ENCODE measurements at regions of chr18 and their contacts with region 1.

Region 1: DNA sequence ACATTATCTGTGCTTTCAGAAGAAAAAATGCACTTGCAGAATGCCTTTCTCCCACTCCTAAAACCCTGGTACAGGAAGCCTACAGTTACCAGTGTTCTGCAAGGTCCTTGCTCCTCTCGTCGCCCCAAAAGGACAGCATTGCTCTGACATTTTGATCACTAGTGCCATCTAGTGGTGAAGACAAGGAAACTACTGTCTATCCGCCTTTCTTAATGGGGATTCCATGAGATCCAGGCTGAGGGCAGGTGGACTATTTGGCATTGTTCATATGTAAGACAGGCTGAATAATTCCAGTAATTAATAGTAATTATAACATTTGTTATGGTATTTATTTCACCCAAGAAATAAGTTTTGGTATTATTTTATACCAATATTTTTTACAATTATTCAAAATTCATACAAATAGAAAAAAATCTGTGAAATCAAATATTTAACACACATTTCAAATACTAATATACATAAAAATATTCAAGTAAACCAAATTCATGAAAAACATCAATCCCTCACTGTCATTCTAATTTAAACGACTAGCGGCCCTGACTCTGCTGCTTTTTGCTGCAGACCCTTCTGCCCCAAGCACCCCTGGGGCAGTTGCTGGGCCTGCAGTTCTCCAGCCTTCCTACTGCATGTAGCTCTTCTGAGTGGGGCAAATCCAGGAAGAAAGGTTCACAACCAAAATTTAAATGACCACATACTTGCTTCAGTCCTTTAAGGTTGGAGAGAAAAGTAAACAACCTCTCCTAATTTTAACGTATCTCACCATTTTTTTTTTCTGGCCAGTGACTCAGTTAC is 19.0 kb downstream of the TPGS2 start:
- H3K4me3 Mint-ChIP-seq: no peak overlapping the region
- H3K27ac Mint-ChIP-seq: no peak overlapping the region
- H3K4me1 Mint-ChIP-seq: peaks cover 5% of the 10 kb centered on the region
- H3K27me3 Mint-ChIP-seq: no peaks in the 10 kb centered on the region

Region 2: GRCh38 chr18:36688020-36688965 is 121.5 kb before region 1 on chr18:
- intact Hi-C with region 1: loop called (anchors 5 kb)
- H3K4me3 Mint-ChIP-seq: no peak overlapping the region
- H3K27ac Mint-ChIP-seq: no peak overlapping the region
- H3K4me1 Mint-ChIP-seq: no peaks in the 10 kb centered on the region
- H3K27me3 Mint-ChIP-seq: peaks cover 2% of the 10 kb centered on the region